CD8-positive, alpha-beta T cell (primary cell): ENCODE measurements at regions of chr14 and their contacts with region 1.

Region 1: DNA sequence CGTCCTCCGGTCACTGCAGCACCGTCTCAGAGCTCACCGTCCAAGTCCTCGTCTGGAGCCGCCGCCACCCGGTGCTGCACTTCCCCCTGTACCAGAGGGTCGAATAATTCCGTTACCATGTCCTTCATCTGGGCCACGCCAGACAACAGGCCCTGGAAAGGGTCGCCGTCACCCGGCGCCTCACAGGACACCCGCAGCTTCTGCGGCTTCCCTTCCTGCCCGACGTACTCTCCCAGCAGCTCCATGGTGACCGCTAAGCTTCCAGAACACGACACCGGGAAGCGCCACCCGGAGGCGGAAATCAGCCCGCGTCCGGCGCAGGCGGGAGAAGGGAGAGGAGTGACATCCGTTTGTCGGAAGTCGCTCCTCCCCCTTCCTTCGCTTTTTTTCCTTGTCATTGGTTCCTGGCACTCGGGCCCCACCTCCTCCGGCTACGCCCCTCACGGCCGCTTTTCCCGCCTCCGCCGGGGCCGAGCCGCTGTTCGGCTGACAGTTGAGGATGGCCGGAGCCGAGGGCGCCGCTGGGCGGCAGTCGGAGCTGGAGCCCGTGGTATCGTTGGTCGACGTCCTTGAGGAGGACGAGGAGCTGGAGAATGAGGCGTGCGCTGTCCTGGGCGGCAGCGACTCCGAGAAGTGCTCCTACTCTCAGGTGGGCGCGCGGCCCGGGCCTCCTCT is at the starts of genes GON7 and UBR7:
- DNase-seq: peak; percentile 65 to 96 (median 87)
- ATAC-seq: peak; percentile 96
- H3K4me3 ChIP-seq: peak within 1 kb of the TSS; percentile 96 to 99
- H3K4me3 Mint-ChIP-seq: peak within 1 kb of the TSS; percentile 95
- H3K27ac ChIP-seq: peak within 1 kb of the TSS; percentile 79 to 82
- H3K27ac Mint-ChIP-seq: peak within 1 kb of the TSS; percentile 90
- H3K4me1 ChIP-seq: peaks cover 33% of the 10 kb centered on the region
- H3K4me1 Mint-ChIP-seq: peaks cover 46% of the 10 kb centered on the region
- H3K27me3 ChIP-seq: no peaks in the 10 kb centered on the region
- H3K27me3 Mint-ChIP-seq: no peaks in the 10 kb centered on the region
- CTCF ChIP-seq: no peak
- total RNA-seq, gene GON7: 1.4 to 2.4 TPM
- total RNA-seq, gene UBR7: 6.7 to 7.0 TPM

Region 2: DNA sequence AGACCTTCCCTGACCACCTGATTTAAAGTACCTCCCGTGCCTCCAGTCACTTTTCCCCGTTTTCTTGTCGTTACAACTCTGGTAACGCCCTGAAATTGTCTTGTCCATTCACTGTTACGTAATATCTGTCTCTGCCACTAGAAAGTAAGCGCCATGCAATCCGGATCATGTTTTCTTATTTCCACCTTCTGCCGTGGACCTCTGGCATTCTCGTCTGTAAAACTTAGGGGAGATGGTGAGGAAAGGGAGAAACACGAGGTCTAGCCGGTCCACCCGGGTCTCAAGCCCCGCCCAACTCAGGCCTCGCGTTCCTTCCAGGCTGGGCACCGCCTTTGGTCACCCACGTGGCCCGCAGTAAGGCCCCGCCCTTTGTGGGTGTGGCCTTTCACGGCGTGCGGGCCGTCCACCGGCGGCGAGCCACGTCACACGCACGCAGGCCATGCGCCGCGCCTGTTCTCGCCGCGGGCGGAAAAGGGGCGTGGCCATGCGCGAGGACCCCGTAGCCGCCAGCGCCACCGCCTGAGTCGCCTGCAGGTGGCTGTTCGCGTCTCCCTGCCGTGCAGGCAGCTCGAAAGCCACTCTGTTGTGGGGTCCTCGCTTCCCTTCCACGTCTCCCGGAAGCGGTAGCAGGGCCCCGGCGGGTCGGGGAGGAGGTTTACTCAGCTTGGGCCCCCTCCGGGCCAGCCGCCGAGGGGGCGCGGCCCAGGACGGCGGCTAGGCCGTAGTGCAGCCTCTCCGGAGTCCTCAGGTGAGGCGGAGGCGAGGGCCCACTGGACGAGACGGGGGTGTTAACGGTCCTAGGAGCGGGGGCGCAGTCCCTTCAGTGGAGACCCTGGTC is 413.0 kb before region 1 on chr14 and contains the start of gene GOLGA5:
- CTCF ChIA-PET with region 1: no interaction called
- POLR2A ChIA-PET with region 1: no interaction called
- intact Hi-C with region 1: loop called (anchors 1 to 5 kb)
- DNase-seq: peak; percentile 97 to 99 (median 98)
- ATAC-seq: peak; percentile 94
- H3K4me3 ChIP-seq: peak within 1 kb of the TSS; percentile 92 to 99
- H3K4me3 Mint-ChIP-seq: peak within 1 kb of the TSS; percentile 97
- H3K27ac ChIP-seq: peak within 1 kb of the TSS; percentile 88 to 92
- H3K27ac Mint-ChIP-seq: peak within 1 kb of the TSS; percentile 97
- H3K4me1 ChIP-seq: peaks cover 27% of the 10 kb centered on the region
- H3K4me1 Mint-ChIP-seq: peaks cover 38% of the 10 kb centered on the region
- H3K27me3 ChIP-seq: no peaks in the 10 kb centered on the region
- H3K27me3 Mint-ChIP-seq: no peaks in the 10 kb centered on the region
- CTCF ChIP-seq: no peak
- total RNA-seq, gene GOLGA5: 4.5 to 5.9 TPM

Region 3: DNA sequence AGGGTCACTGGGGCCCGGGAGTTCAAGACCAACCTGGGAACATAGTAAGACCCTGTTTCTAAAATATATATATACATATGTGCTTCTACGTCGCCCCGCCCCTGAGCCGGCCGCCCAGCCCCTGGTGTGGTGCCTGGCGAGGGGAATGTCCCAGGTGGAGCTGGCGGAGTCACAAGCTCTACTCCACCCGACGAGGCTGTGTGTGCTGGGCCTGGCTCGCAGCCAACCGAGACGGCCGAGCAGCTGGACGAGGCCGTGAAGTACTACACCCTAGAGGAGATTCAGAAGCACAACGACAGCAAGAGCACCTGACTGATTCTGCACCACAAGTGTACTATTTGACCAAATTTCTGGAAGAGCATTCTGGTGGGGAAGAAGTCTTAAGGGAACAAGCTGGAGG is 69.1 kb before region 1 on chr14:
- CTCF ChIA-PET with region 1: no interaction called
- POLR2A ChIA-PET with region 1: no interaction called
- intact Hi-C with region 1: loop called in 1 of 2 experiments (anchors 5 kb)
- DNase-seq: no peak
- ATAC-seq: no peak
- H3K4me3 ChIP-seq: no peak overlapping the region
- H3K4me3 Mint-ChIP-seq: no peak overlapping the region
- H3K27ac ChIP-seq: no peak overlapping the region
- H3K27ac Mint-ChIP-seq: no peak overlapping the region
- H3K4me1 ChIP-seq: no peaks in the 10 kb centered on the region
- H3K4me1 Mint-ChIP-seq: peaks cover 2% of the 10 kb centered on the region
- H3K27me3 ChIP-seq: no peaks in the 10 kb centered on the region
- H3K27me3 Mint-ChIP-seq: no peaks in the 10 kb centered on the region
- CTCF ChIP-seq: no peak

Region 4: GRCh38 chr14:93219103-93219726 is 12.3 kb after region 1 on chr14:
- CTCF ChIA-PET with region 1: interaction called, 5 read pairs
- POLR2A ChIA-PET with region 1: no interaction called
- intact Hi-C with region 1: loop called in 1 of 2 experiments (anchors 1 kb)
- DNase-seq: peak in 5 of 9 experiments; percentile 47 to 77 (median 65)
- ATAC-seq: peak; percentile 84
- H3K4me3 ChIP-seq: no peak overlapping the region
- H3K4me3 Mint-ChIP-seq: no peak overlapping the region
- H3K27ac ChIP-seq: no peak overlapping the region
- H3K27ac Mint-ChIP-seq: no peak overlapping the region
- H3K4me1 ChIP-seq: no peaks in the 10 kb centered on the region
- H3K4me1 Mint-ChIP-seq: no peaks in the 10 kb centered on the region
- H3K27me3 ChIP-seq: no peaks in the 10 kb centered on the region
- H3K27me3 Mint-ChIP-seq: no peaks in the 10 kb centered on the region
- CTCF ChIP-seq: peak; percentile 76

Region 5: DNA sequence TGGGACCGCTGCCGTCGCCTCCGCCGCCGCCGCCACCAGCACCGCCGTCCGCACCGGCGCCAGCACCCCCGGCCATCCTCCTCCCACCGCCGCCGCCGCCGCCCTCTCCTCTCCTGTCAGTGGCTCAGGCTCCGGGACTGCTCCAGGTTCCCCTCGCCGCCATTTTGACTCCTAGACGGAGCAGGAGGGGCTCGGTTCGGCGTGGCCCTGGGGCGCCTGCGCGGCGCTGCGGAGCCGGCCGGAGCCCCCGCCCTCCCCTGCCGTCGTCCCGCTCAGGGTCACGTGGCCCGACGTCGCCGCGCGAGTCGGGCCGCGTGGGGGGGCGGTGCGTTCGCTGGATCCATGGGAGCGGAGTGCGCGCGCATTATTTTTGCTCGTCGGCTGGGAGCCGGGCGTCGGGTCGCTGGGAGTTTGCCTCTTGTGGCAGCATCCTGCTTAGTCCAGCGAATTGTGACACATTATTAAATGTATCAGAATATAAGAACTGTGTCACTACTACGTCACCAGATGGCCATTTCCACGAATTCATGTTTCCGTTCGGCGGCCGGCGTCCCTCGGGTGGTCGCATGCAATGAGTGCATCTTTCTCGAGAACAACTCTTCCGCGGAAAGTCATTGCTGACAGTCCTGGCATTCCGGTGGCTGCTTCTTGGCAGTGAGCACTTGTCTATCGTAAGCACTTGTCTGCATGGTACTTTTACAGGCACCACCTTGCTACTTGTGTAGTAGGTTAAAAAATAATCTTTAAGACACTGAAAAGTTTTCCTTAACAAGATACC is 126.1 kb after region 1 on chr14 and contains the start of gene BTBD7:
- CTCF ChIA-PET with region 1: no interaction called
- POLR2A ChIA-PET with region 1: no interaction called
- intact Hi-C with region 1: loop called (anchors 1 to 2 kb)
- DNase-seq: peak; percentile 87 to 98 (median 94)
- ATAC-seq: peak; percentile 92
- H3K4me3 ChIP-seq: peak within 1 kb of the TSS; percentile 81 to 85
- H3K4me3 Mint-ChIP-seq: peak within 1 kb of the TSS; percentile 95
- H3K27ac ChIP-seq: peak within 1 kb of the TSS; percentile 80 to 83
- H3K27ac Mint-ChIP-seq: peak within 1 kb of the TSS; percentile 95
- H3K4me1 ChIP-seq: peaks cover 27% of the 10 kb centered on the region
- H3K4me1 Mint-ChIP-seq: peaks cover 50% of the 10 kb centered on the region
- H3K27me3 ChIP-seq: no peaks in the 10 kb centered on the region
- H3K27me3 Mint-ChIP-seq: no peaks in the 10 kb centered on the region
- CTCF ChIP-seq: no peak
- total RNA-seq, gene BTBD7: 22.9 to 23.5 TPM

Region 6: GRCh38 chr14:93493054-93493453 is 286.1 kb after region 1 on chr14:
- CTCF ChIA-PET with region 1: no interaction called
- POLR2A ChIA-PET with region 1: no interaction called
- intact Hi-C with region 1: no loop called
- DNase-seq: no peak
- ATAC-seq: no peak
- H3K4me3 ChIP-seq: no peak overlapping the region
- H3K4me3 Mint-ChIP-seq: no peak overlapping the region
- H3K27ac ChIP-seq: no peak overlapping the region
- H3K27ac Mint-ChIP-seq: no peak overlapping the region
- H3K4me1 ChIP-seq: no peaks in the 10 kb centered on the region
- H3K4me1 Mint-ChIP-seq: no peaks in the 10 kb centered on the region
- H3K27me3 ChIP-seq: no peaks in the 10 kb centered on the region
- H3K27me3 Mint-ChIP-seq: peaks cover 24% of the 10 kb centered on the region
- CTCF ChIP-seq: no peak